Activated T-helper 1 cell treated with anti-CD3 and anti-CD28 coated beads, Interleukin-12 subunit alpha, Interleukin-12 subunit beta, Interleukin-2, Interleukin-4 antibody, amounts not matched to agents 30 ng/mL and 10 ng/mL and 1 ng/mL, durations not matched to agents 14 hours and 24 hours and 36 hours (primary cell): ENCODE measurements at regions of chr3 and their contacts with region 1.

Region 1: GRCh38 chr3:88003115-88003755 is 55.6 kb downstream of the CGGBP1 start:
- DNase-seq: no peak
- H3K4me3 Mint-ChIP-seq: no peak overlapping the region
- H3K27ac Mint-ChIP-seq: no peak overlapping the region
- H3K4me1 Mint-ChIP-seq: peaks cover 14% of the 10 kb centered on the region
- H3K27me3 Mint-ChIP-seq: peaks cover 17% of the 10 kb centered on the region

Region 2: GRCh38 chr3:86969500-86970189 is 1033.6 kb before region 1 on chr3:
- intact Hi-C with region 1: loop called (anchors 10 kb)
- DNase-seq: peak; percentile 9
- H3K4me3 Mint-ChIP-seq: no peak overlapping the region
- H3K27ac Mint-ChIP-seq: no peak overlapping the region
- H3K4me1 Mint-ChIP-seq: no peaks in the 10 kb centered on the region
- H3K27me3 Mint-ChIP-seq: no peaks in the 10 kb centered on the region

Region 3: DNA sequence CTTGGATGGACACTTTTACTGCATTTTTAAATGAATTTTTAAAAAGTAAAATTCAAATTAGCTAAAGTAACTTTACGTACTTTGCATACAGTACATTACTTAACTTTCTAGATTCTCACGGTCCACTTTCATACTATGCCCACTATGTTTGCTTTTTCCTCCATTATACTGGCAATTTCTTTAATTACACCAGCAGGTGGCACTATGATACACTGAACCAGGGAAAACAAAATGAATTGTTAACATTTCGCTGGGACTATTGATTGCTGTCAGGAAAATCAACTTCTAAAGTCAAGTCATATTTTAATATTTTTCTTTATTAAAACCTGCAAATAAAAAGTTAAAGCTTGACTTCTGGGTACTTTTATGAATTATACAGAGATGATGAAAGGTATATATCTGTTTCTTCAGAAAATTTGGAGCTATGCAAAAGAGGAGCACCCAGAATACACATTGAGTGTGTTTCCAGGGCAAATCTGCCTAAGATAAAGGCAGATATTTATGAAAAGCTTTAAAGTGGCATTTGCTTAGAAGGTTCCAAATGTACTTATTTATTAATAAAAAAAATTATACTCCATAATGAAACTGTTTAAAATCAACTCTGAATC is 705.0 kb before region 1 on chr3:
- intact Hi-C with region 1: loop called (anchors 1 kb)
- DNase-seq: no peak
- H3K4me3 Mint-ChIP-seq: no peak overlapping the region
- H3K27ac Mint-ChIP-seq: no peak overlapping the region
- H3K4me1 Mint-ChIP-seq: no peaks in the 10 kb centered on the region
- H3K27me3 Mint-ChIP-seq: peaks cover 11% of the 10 kb centered on the region

Region 4: GRCh38 chr3:87503900-87504508 is 499.2 kb before region 1 on chr3:
- intact Hi-C with region 1: loop called (anchors 5 kb)
- DNase-seq: no peak
- H3K4me3 Mint-ChIP-seq: no peak overlapping the region
- H3K27ac Mint-ChIP-seq: no peak overlapping the region
- H3K4me1 Mint-ChIP-seq: no peaks in the 10 kb centered on the region
- H3K27me3 Mint-ChIP-seq: no peaks in the 10 kb centered on the region

Region 5: GRCh38 chr3:87771341-87772192 is 231.7 kb before region 1 on chr3:
- intact Hi-C with region 1: loop called (anchors 1 kb)
- DNase-seq: peak; percentile 17
- H3K4me3 Mint-ChIP-seq: no peak overlapping the region
- H3K27ac Mint-ChIP-seq: no peak overlapping the region
- H3K4me1 Mint-ChIP-seq: no peaks in the 10 kb centered on the region
- H3K27me3 Mint-ChIP-seq: peaks cover 16% of the 10 kb centered on the region

Region 6: DNA sequence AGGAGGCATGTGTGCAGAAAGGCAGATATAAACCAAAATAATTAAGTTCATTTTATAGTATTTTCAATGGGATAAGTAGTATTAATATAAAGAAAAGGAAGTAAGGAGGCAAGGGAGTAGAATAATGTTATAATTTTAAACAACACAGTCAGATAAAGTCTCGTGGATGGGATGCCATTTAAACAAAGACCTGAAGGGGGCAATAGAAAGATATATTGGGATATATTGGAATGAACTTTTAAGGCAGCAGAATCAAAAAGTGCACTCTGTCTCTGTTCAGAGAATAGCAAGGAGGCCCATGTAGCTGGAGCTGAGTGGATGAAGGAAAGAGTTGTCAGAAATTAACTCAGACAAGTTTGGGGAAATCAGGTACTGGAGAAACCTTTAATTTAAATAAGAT is 103.2 kb before region 1 on chr3:
- intact Hi-C with region 1: loop called (anchors 1 kb)
- DNase-seq: no peak
- H3K4me3 Mint-ChIP-seq: no peak overlapping the region
- H3K27ac Mint-ChIP-seq: no peak overlapping the region
- H3K4me1 Mint-ChIP-seq: no peaks in the 10 kb centered on the region
- H3K27me3 Mint-ChIP-seq: no peaks in the 10 kb centered on the region

Region 7: GRCh38 chr3:88180398-88180999 is 177.3 kb after region 1 on chr3:
- intact Hi-C with region 1: loop called (anchors 1 kb)
- DNase-seq: no peak
- H3K4me3 Mint-ChIP-seq: no peak overlapping the region
- H3K27ac Mint-ChIP-seq: no peak overlapping the region
- H3K4me1 Mint-ChIP-seq: no peaks in the 10 kb centered on the region
- H3K27me3 Mint-ChIP-seq: peaks cover 16% of the 10 kb centered on the region